Psoas muscle (tissue), 8 donors: ENCODE measurements at regions of chr6 and their contacts with region 1.

Region 1: DNA sequence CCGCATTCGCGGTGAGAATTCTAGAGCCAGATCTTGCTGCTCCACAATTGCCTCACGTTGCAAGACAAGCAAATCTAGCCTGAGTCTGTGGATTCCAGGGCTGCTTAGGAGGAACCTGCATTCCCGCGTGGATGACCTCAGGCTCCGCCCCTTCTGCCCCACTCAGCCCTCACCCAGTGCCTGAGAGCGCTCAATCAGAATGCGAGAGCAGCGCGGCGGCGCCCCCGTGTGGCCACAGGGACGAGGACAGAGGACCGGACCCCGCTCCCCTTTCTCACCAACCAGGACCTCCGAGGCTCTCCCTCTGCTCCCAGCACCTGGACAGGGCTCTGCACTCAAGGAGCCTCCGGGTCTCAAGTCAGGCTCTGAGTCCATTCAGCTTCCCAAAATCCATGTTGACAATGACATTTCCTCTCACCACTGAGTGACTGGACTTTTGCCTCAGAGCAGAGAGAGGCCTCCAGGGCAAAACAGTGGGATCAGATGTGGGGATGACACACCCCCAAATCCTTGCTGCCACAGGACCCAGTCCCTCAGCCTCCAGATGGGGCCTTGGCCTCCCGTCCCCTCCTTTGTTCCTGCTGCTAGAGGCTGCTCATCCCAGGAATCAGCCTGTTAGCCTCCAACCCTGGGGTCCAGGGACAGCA is 52.0 kb downstream of the RPP21 start:
- DNase-seq: peak; percentile 80 to 89
- ATAC-seq: peak; percentile 73 to 93 (median 90)
- H3K4me3 ChIP-seq: no peak overlapping the region
- H3K27ac ChIP-seq: no peak overlapping the region
- H3K4me1 ChIP-seq: no peaks in the 10 kb centered on the region
- H3K27me3 ChIP-seq: peaks cover 0 to 12% (median 2%) of the 10 kb centered on the region in 3 donors
- CTCF ChIP-seq: peak; percentile 77

Region 2: DNA sequence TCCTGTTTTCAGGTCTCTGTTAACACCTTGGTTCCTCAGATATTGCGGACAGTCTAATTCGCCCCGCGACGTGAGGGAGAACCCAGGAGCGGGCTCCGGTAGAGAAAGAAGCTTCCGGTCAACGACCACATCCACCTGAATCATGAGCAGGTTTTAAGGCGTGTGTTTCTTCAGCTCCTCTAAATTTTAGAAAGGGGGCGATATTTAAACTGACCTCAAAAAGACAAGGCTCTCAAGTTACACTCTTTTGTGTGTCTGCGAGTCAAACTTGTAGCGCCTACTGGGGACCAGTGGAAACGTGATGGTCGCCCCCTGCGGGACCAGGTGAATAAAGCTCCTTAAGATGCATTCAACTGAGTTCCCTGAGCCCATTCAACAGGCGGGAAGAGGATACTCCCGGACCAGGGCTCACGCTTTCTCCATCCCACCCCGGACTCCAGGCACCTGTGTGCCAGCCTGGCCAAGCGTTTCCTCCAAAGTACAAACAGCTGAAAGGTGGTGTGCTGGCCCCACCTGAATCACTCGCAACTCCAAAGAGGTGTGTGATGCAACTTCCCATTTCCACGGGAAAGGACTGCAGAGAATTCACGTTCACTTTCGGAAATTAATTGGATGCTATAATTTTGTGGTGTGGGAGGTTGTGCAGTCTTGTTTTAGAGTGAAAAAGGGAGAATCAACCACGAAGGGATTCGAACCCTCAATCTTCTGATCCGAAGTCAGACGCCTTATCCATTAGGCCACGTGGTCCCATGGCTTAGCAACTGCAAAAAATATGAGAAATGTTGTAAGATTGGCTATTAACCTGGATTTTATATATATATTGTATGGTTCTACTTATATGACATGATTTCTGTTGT is 1854.3 kb before region 1 on chr6:
- intact Hi-C with region 1: no loop called
- DNase-seq: no peak
- ATAC-seq: no peak
- H3K4me3 ChIP-seq: peak overlapping the region; percentile 4
- H3K27ac ChIP-seq: no peak overlapping the region
- H3K4me1 ChIP-seq: no peaks in the 10 kb centered on the region
- H3K27me3 ChIP-seq: peaks cover 3 to 5% (median 4%) of the 10 kb centered on the region in 3 donors
- CTCF ChIP-seq: no peak

Region 3: DNA sequence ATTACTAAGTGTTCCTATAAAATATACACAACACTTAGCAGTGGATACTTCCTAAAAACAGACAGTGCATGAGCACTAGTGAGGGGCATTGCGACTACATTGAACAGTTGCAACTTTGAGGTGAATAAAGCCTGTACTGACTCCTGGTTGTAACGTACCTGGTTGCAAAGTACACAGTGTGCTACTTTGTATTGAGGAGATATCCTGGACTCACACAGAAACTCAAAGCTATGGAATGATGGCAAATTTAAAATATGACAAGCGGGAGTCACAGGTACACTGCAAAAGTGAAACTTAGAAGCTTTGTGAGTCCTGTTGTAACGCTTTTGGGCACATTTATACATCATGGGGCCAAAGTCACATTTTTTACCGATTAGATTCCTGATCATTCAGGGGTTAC is 510.3 kb before region 1 on chr6:
- intact Hi-C with region 1: no loop called
- DNase-seq: no peak
- ATAC-seq: no peak
- H3K4me3 ChIP-seq: peak overlapping the region; percentile 74
- H3K27ac ChIP-seq: peak overlapping the region; percentile 71
- H3K4me1 ChIP-seq: no peaks in the 10 kb centered on the region
- H3K27me3 ChIP-seq: no peaks in the 10 kb centered on the region
- CTCF ChIP-seq: no peak

Region 4: DNA sequence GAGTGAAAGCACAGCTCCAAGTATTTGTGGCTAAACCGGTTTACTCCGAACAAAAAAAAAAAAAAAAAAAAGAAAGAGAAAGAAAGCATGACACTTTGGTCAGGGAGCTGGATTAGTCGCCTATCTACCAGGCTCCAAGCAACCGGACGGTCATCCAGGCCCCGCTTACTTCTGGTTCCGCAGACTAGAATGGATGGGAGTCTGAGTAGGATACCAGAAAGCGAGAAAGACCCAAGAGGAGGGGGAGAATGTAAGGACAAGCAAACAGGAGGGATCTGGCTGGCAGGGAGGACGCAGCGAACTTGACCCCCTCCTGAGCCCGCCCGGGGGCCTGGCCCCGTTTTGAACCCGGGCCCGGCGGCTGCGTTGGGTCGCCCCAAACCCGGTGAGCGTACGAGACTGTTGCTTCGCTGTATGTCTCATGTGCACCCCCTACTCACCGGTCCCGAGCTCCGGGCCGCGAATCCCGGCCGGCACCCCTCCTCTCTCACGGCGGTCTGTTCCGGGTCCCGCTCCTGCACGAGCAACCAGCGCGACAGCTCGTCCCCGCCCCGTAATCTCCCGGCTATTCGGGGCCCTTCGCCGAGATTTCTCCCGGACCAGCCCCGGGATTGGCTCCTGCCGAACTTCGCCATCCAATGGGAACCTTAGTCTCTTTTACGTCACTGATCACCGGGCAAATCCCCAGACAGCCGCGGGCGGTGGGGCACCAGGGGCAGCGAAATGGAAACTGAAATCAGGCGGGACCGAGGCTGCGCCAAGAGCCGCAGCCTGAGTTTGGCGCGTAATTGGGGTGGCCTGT is 183.9 kb before region 1 on chr6 and contains the start of gene TRIM26:
- intact Hi-C with region 1: loop called (anchors 5 to 10 kb)
- DNase-seq: peak; percentile 95 to 98
- ATAC-seq: peak; percentile 97
- H3K4me3 ChIP-seq: peak within 1 kb of the TSS; percentile 74
- H3K27ac ChIP-seq: peak within 1 kb of the TSS; percentile 98
- H3K4me1 ChIP-seq: peaks cover 19% of the 10 kb centered on the region
- H3K27me3 ChIP-seq: no peaks in the 10 kb centered on the region
- CTCF ChIP-seq: no peak
- total RNA-seq, gene TRIM26: 13.2 to 18.1 (median 14.8) TPM

Region 5: DNA sequence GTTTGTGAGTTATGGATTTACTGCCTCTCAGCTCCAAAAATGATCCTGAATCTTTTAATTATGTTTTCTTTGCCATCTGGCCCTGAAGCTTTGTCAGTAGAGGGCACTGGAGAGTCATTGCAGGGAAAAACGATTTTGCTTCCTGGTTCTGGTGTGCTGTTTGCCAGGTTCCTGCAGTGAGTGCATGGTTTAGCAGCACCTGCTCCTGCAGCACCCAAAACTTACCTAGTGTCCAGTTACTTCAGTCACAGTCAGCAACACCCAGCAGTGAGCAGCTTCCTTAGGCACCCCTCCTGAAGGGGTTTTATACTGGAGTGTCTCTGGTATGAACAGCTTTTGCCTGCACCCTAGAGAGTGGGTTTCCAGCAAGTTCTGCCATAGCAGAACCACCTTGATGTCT is 177.7 kb before region 1 on chr6:
- intact Hi-C with region 1: loop called (anchors 5 to 10 kb)
- DNase-seq: no peak
- ATAC-seq: peak; percentile 58 to 66 (median 62)
- H3K4me3 ChIP-seq: no peak overlapping the region
- H3K27ac ChIP-seq: no peak overlapping the region
- H3K4me1 ChIP-seq: no peaks in the 10 kb centered on the region
- H3K27me3 ChIP-seq: no peaks in the 10 kb centered on the region
- CTCF ChIP-seq: peak; percentile 70

Region 6: DNA sequence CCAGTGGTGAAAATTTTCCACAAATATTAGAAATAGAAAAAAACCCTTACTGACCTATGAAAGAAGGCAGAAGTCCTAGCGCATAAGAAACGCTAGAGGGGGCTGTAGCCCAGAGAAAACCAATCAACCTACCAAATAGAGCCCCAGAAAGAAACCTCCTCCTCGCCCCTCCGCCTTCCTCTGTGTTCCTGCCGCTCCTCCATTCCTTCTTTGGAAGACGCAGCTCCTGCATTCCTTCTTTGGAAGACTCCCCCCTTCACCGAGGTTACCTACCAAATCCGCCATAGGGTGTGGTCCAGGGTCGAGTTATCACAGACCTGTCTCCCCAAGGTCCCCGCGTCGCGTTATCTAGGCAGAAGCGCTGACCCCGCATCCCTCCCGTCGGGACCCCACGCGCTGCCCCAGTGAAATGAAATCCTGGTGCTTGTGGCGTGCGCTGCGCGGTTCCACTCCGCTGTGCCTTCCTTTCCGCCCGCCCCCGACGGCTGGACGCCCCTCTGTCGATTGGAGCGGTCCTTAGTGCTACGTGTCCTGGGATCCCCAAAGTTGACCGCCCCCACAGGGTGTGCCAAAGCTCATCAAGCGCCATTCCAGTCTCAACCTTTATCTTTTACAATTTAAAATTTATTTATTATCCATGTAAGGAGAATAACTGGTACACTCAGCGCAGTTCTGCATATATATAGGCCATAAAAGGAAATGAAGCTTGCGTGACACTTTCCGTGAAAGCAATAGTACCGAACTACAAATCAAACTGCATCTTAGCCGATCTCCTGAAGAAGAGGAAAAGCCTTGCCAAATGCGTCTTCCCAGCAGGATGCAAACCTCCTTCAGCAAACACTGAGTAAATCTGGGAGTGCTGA is 39.0 kb before region 1 on chr6:
- intact Hi-C with region 1: loop called in 1 of 2 experiments (anchors 5 kb)
- DNase-seq: peak in 1 of 2 donors; percentile 27
- ATAC-seq: no peak
- H3K4me3 ChIP-seq: peak overlapping the region; percentile 44
- H3K27ac ChIP-seq: no peak overlapping the region
- H3K4me1 ChIP-seq: no peaks in the 10 kb centered on the region
- H3K27me3 ChIP-seq: peaks cover 4 to 59% (median 7%) of the 10 kb centered on the region in 3 donors
- CTCF ChIP-seq: peak; percentile 49